Ascending aorta (tissue), 2 donors: ENCODE measurements at regions of chr11 and their contacts with region 1.

Region 1: DNA sequence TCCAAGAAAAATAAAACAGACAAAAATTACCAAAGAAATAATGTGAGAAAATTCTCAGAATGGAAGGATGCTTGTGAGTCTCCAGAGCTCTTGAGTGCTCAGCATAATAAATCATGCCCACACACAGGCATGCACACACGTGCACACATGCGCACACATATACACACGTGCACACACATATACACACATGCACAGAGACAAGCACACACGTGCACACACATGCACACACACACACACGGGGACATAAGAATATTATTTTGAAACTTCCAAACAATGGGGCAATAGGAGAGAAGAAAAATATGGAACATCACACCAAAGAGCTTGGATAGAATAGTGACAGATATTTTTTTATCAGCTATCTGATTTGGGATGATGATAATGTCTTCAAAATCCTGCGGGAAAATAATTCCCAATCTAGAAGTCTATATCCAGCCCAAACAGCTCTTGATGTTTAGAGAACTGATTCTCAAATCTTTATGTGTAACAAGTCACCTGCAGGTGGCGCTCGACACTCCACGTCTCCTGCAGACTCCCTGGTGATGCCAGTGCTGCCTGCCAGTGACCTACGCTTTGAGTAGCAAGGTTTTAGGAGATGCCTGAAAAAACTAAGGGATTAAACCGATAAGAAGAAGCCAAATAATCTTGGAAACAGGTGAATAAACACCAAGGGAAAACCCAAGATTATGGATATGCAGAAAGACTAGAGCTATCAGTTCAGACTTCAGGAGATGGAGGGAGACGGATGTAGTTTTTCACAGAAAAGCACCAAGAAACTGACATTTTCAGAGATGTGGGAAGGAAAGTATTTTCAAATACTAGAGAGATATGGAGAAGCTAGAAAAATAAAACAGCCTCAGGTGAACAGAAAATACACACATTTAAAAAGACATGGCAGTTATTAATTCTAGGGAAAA is 743.6 kb downstream of the ETS1 start:
- DNase-seq: peak; percentile 10 to 77
- H3K4me3 ChIP-seq: no peak overlapping the region
- H3K27ac ChIP-seq: no peak overlapping the region
- H3K4me1 ChIP-seq: no peaks in the 10 kb centered on the region
- H3K27me3 ChIP-seq: no peaks in the 10 kb centered on the region
- CTCF ChIP-seq: peak in 2 of 3 experiments; percentile 52 to 64

Region 2: DNA sequence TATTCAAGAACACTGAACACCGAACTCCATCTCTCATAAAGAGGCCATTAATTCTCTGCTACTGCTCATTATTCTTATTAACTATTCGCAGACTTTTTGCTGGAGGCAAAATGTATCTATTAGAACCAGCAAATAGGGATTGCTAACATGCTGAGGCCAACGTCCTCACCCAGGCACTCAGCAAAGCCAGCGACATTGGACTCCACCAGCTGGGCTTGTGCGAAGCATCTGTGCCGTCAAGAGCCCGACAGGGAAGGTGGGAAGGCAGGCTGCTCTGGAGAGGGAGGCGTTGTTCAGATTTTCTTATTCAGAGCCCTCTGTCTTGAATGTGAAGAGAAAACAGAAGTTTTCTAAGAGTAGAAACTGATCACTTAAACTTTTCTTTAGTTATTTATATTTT is 227.6 kb before region 1 on chr11:
- intact Hi-C with region 1: no loop called
- DNase-seq: no peak
- H3K4me3 ChIP-seq: no peak overlapping the region
- H3K27ac ChIP-seq: no peak overlapping the region
- H3K4me1 ChIP-seq: no peaks in the 10 kb centered on the region
- H3K27me3 ChIP-seq: no peaks in the 10 kb centered on the region
- CTCF ChIP-seq: no peak

Region 3: DNA sequence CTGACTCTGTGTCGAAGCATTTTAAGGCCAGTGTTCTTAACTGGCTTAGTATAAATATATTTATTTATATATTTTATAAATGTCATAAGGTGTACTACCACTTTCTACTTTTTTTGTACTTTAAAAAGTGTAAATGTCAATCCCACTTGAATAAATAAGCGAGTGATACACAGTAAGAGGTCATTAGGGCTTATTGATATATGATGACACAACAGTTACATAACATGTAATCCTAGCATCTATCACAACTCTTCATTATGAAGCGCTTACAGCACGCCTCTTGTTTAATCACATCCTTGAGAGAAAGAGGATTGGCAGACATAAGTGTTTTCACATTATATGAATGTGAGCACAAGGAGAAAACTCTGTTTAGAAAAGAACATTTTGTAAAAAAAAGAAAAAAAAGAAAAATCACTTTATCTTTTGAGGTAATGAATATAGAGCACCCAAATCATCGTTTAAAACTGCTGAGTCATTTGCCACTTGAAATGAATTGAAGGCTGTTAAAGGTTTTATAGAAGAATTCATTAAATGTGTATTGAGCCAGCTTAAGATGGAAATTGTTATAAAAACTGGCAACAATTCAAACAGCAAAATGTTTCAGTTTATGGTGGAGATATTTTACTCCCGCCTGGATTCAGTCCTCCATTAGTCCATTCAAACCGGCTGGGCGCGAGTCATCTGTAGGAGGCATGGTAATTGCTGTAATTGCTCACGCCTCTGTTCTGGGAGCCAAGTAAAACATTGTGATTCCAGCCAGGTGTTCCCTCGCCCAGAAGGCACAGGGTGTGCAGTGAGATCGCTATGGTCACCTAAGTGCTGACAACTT is 215.9 kb before region 1 on chr11:
- intact Hi-C with region 1: no loop called
- DNase-seq: no peak
- H3K4me3 ChIP-seq: no peak overlapping the region
- H3K27ac ChIP-seq: no peak overlapping the region
- H3K4me1 ChIP-seq: no peaks in the 10 kb centered on the region
- H3K27me3 ChIP-seq: no peaks in the 10 kb centered on the region
- CTCF ChIP-seq: no peak

Region 4: DNA sequence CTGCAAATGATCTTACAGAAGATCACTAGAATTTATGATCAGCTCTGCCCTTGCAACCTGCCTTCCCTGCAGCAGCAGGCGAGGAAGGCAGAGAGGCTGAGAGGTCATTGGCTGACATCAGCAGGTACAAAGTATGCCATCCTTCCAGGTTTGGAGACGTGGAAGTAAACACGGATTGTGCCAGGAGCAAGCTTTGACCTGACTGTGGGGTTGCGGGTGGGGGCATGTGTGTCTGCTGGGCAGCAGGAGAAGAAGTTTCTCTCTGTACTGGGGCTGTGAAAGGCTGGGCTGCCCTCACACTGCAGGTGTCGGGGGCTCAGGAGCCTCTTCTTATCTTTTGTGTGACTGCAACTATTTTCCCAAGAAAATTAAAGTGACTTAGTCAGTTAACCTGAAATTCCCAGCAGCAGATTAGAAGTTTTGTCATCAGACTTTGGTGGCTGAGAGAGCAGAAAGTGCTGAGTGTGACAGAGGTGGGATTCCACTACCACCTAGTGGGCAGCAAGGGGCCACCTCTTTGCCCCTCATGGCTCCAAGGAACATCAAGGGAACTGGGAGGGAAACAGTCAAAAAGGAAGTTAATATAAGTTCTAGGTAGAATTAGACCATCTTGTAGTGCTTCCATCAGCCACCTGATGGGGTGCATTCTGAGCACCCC is 177.7 kb after region 1 on chr11:
- intact Hi-C with region 1: loop called (anchors 5 kb)
- DNase-seq: no peak
- H3K4me3 ChIP-seq: no peak overlapping the region
- H3K27ac ChIP-seq: no peak overlapping the region
- H3K4me1 ChIP-seq: no peaks in the 10 kb centered on the region
- H3K27me3 ChIP-seq: no peaks in the 10 kb centered on the region
- CTCF ChIP-seq: peak in 2 of 3 experiments; percentile 11 to 31